T-cell (primary cell): ENCODE measurements at regions of chr3 and their contacts with region 1.

Region 1: DNA sequence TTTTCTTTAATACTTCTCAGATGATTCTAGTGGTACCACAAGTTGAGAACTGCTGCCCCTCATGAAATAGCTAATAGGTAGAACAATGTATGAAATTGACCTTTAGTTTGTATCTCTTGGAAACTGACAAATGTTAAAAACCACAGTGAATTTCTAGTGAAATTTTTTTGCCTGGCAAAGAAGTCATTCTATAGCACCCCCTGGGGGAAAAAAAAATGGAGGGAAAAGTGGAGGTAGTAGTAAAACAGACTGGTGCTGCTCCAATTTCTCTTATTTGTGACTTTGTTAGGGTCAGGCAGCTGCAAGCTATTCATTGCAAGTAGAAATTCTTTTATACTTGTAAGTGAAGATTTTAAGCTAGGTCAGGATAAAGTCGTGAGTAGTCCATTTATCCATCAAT is 605.0 kb downstream of the NLGN1 start:
- DNase-seq: no peak
- ATAC-seq: no peak
- H3K4me3 ChIP-seq: no peak overlapping the region
- H3K4me3 Mint-ChIP-seq: no peak overlapping the region
- H3K27ac ChIP-seq: no peak overlapping the region
- H3K27ac Mint-ChIP-seq: no peak overlapping the region
- H3K4me1 ChIP-seq: no peaks in the 10 kb centered on the region
- H3K4me1 Mint-ChIP-seq: no peaks in the 10 kb centered on the region
- H3K27me3 ChIP-seq: no peaks in the 10 kb centered on the region
- H3K27me3 Mint-ChIP-seq: no peaks in the 10 kb centered on the region

Region 2: DNA sequence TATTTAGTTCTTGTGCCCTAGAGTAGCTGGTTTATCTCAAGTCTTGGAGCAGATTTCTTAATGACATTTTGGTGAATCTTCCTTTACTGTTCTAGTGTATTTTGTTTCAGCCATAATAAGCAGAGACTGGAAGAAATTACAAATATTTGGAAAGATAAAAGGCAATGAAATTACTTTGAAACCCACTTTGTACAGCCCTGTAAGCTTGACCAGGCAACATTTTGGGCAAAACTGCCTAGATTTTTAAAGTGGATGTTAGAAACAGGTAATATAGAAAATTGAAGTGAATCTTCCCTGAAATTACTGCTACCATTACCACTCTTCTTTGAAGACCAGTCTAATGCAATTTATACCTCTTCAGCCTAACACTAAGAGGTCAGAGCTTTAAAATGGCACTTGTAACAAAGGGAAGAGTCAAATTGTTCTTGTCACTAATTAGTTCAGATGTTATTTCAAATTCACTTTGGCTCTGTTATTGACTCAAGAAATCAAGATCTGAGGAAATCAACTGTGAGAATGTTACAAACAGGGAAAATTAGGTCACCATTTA is 15.6 kb before region 1 on chr3:
- CTCF ChIA-PET with region 1: no interaction called
- POLR2A ChIA-PET with region 1: interaction called in 1 of 2 experiments, 11 read pairs
- DNase-seq: no peak
- ATAC-seq: no peak
- H3K4me3 ChIP-seq: no peak overlapping the region
- H3K4me3 Mint-ChIP-seq: no peak overlapping the region
- H3K27ac ChIP-seq: no peak overlapping the region
- H3K27ac Mint-ChIP-seq: no peak overlapping the region
- H3K4me1 ChIP-seq: no peaks in the 10 kb centered on the region
- H3K4me1 Mint-ChIP-seq: no peaks in the 10 kb centered on the region
- H3K27me3 ChIP-seq: no peaks in the 10 kb centered on the region
- H3K27me3 Mint-ChIP-seq: no peaks in the 10 kb centered on the region

Region 3: DNA sequence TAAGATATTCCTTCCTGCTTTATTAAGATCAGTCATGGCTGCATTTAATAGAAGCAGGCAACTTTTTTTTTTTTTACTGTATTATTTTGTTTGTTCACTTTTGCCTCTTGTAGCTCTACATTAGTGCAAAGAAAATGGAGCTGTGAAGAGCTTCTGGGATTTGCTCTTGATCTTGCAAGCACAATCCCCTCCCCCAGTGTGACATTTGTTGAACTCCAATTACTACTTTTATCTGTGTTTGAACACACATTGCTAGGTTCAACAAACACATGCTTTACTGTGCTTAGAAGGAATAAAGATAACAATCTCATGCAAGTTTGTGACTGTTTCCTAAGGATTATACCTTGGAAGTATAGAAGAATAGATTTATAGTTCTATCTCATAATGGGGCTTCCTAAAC is 43.8 kb after region 1 on chr3:
- CTCF ChIA-PET with region 1: no interaction called
- POLR2A ChIA-PET with region 1: no interaction called
- DNase-seq: no peak
- ATAC-seq: no peak
- H3K4me3 ChIP-seq: no peak overlapping the region
- H3K4me3 Mint-ChIP-seq: no peak overlapping the region
- H3K27ac ChIP-seq: no peak overlapping the region
- H3K27ac Mint-ChIP-seq: no peak overlapping the region
- H3K4me1 ChIP-seq: no peaks in the 10 kb centered on the region
- H3K4me1 Mint-ChIP-seq: no peaks in the 10 kb centered on the region
- H3K27me3 ChIP-seq: no peaks in the 10 kb centered on the region
- H3K27me3 Mint-ChIP-seq: no peaks in the 10 kb centered on the region